ENCODE measurements at regions of chr11 and their contacts with region 1.

Region 1: DNA sequence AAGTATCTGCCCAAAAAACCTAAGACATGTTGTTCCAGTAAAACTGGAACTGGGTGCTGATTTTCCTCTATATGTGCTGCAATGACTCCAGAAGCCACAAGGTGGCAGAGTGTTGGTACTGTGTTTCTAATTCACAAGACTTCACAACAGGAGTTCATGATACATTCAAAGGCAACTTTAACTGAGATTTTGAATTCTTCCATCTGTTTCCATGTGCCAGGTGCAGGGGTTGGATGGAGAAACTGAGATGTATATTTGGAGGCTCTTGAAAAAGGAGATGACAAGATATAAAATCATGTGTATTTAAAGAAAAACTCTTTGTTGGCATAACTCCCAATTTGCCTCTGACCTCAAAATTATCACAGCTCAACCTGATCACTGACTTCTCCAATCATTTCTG is 1098.6 kb upstream of the CCDC90B start:
- DNase-seq: peak; percentile 42
- ATAC-seq: no peak
- H3K4me3 Mint-ChIP-seq: no peak overlapping the region
- H3K27ac Mint-ChIP-seq: no peak overlapping the region
- H3K4me1 Mint-ChIP-seq: no peaks in the 10 kb centered on the region
- H3K27me3 Mint-ChIP-seq: no peaks in the 10 kb centered on the region

Region 2: DNA sequence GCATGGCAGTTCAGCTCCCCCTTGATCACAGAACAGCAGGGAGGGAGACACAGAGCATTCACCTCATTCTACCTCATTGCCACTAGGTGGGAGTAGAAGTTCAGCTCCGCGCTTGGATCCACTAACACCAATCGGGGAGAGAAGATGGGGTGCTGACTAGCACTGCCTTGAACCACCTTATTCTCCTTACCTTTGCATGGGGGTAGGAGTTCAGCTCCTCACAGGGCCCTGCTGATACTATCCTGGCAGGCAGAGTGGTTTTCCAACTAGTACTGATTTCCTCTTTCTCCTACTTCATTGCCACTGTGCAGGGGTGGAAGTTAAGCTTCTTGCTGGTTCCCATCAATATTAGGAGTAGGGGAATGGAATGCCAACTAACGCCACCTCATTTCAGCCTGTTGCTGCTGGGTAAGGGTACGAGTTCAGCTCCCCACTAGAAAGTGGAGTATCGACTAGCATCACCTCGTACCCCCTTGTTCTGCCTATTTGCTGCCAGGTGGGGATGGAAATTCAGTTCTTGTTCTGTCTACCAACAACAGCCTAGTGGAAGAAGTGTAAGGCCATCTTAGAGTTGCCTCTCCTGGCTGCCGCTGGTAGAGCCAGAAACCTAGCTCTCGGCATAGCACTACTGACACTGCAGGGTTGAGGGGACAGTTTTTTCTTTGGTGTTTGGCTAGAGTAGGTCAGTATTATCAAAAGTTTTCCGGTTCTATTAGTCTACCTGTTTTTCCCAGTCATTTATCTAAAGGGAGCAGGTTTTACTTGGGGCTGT is 547.7 kb before region 1 on chr11:
- CTCF ChIA-PET with region 1: interaction called, 3 read pairs
- POLR2A ChIA-PET with region 1: no interaction called
- intact Hi-C with region 1: loop called in 1 of 2 experiments (anchors 10 kb)
- DNase-seq: peak; percentile 36
- ATAC-seq: peak; percentile 64
- H3K4me3 Mint-ChIP-seq: no peak overlapping the region
- H3K27ac Mint-ChIP-seq: no peak overlapping the region
- H3K4me1 Mint-ChIP-seq: no peaks in the 10 kb centered on the region
- H3K27me3 Mint-ChIP-seq: peaks cover 7% of the 10 kb centered on the region

Region 3: GRCh38 chr11:84524422-84525051 is 139.8 kb after region 1 on chr11:
- CTCF ChIA-PET with region 1: no interaction called
- POLR2A ChIA-PET with region 1: no interaction called
- intact Hi-C with region 1: loop called in 1 of 2 experiments (anchors 5 kb)
- DNase-seq: no peak
- ATAC-seq: no peak
- H3K4me3 Mint-ChIP-seq: no peak overlapping the region
- H3K27ac Mint-ChIP-seq: no peak overlapping the region
- H3K4me1 Mint-ChIP-seq: no peaks in the 10 kb centered on the region
- H3K27me3 Mint-ChIP-seq: no peaks in the 10 kb centered on the region

Region 4: DNA sequence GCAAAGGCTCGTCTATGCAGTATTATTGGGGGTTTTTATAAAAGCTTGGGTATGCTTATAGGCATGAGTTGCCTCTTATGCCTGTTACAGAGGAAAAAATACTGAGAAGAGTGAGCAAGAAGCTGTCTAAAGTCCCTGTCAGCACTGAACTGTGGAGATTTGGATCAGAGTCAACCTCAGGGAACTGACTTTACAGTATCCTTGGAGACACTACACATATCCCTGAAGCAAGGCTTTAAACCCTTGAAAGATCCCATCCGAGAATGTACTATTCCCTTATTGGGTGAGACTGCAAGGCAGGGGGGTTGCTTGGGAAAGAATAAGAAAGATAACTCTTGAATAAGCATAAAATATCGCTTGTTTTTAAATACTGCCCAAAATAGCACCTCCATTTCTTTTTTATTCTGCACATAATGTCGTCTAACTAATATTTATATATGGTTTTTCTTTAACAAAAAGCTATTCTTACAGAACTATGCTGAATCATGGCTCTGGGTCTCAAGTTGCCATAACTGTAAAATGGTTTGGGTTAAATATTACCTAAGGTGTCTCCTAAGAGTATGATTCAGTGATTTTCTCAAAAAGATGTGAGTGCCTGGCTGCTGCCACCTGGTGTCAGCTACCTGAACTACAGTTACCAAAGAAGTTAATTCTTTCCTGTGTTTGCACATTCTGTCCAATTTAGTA is 179.6 kb after region 1 on chr11:
- CTCF ChIA-PET with region 1: no interaction called
- POLR2A ChIA-PET with region 1: no interaction called
- intact Hi-C with region 1: loop called (anchors 10 kb)
- DNase-seq: peak; percentile 54
- ATAC-seq: no peak
- H3K4me3 Mint-ChIP-seq: no peak overlapping the region
- H3K27ac Mint-ChIP-seq: no peak overlapping the region
- H3K4me1 Mint-ChIP-seq: no peaks in the 10 kb centered on the region
- H3K27me3 Mint-ChIP-seq: no peaks in the 10 kb centered on the region

Measured in activated CD4-positive, alpha-beta T cell treated with anti-CD3 and anti-CD28 coated beads for 36 hours (primary cell).